K562 (cell line): ENCODE measurements at regions of chr3 and their contacts with region 1.

Region 1: DNA sequence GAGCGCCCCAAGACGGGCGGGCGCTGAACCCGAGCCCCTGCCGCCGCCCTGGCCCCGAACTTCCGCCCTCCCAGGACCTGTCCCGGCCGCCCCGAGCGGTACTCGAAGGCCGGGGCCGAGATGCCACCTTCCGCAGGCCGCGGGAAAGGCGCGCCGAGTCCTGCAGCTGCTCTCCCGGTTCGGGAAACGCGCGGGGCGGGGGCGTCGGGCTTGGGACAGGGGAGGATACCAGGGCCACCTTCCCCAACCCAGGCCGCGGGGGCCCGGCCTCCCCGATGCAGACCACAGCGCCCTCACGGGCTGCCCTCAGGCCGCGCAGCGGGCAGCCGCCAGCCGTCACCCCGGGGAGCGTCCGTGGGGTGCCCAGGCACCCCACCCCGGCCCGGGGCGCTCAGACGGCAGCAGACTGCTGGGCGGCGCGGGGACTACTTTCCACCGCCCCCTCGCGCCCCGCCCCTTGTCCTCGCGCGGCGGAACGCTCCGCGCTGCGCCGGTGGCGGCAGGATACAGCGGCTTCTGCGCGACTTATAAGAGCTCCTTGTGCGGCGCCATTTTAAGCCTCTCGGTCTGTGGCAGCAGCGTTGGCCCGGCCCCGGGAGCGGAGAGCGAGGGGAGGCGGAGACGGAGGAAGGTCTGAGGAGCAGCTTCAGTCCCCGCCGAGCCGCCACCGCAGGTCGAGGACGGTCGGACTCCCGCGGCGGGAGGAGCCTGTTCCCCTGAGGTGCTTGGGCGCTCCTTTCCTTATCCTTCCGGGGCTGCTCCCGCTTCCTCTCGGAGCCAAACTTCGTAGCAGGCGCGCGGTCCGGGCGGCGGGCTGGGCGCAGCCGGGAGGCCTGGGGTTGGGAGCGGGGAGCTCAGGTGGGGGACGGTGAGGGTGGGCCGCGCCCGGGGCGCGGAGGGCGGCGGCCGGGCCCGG is at the start of gene CTNNB1:
- DNase-seq: peak; percentile 82 to 97 (median 84)
- ATAC-seq: peak; percentile 84
- H3K4me3 ChIP-seq: peak within 1 kb of the TSS; percentile 90
- H3K27ac ChIP-seq: peak within 1 kb of the TSS; percentile 94
- H3K4me1 ChIP-seq: peaks cover 9 to 16% of the 10 kb centered on the region in 2 experiments; a peak in 4 of 5 replicates
- H3K27me3 ChIP-seq: peaks cover 5 to 28% of the 10 kb centered on the region in 2 experiments; a peak in 4 of 5 replicates
- CTCF ChIP-seq: no peak
- EP300 ChIP-seq: 0 out of 2 replicates have a peak, but pooled peaks have one; percentile 27
- POLR2A ChIP-seq: peak; percentile 99
- RAD21 ChIP-seq: peak; percentile 22 to 30; a peak in 2 of 4 replicates
- polyA plus RNA-seq, gene CTNNB1: 44.3 to 51.8 TPM

Region 2: DNA sequence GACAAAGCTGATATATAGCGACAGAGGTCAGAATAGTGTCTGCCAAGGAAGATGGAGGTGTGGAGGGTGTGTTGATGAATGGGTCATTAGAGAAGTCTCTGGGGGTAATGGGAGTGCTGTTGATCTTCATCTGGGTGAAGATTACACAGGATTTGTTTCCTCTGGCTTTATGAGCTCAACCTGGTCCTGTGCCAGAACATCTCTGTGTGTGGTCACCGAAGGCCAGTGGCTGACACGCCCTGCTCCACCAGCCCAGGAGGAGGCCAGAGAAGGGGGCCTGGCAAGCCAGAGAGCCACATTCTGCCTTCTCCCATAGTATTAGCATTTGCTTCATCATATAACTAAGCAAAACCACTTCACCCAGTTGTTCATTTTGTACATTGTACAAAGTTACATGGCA is 553.3 kb before region 1 on chr3:
- CTCF ChIA-PET with region 1: no interaction called
- POLR2A ChIA-PET with region 1: no interaction called
- in situ Hi-C with region 1: no loop called
- intact Hi-C with region 1: no loop called
- DNase-seq: no peak
- ATAC-seq: no peak
- H3K4me3 ChIP-seq: no peak overlapping the region
- H3K27ac ChIP-seq: no peak overlapping the region
- H3K4me1 ChIP-seq: no peaks in the 10 kb centered on the region
- H3K27me3 ChIP-seq: no peaks in the 10 kb centered on the region; a peak in 1 of 5 replicates
- CTCF ChIP-seq: no peak
- EP300 ChIP-seq: no peak
- POLR2A ChIP-seq: no peak
- RAD21 ChIP-seq: no peak

Region 3: DNA sequence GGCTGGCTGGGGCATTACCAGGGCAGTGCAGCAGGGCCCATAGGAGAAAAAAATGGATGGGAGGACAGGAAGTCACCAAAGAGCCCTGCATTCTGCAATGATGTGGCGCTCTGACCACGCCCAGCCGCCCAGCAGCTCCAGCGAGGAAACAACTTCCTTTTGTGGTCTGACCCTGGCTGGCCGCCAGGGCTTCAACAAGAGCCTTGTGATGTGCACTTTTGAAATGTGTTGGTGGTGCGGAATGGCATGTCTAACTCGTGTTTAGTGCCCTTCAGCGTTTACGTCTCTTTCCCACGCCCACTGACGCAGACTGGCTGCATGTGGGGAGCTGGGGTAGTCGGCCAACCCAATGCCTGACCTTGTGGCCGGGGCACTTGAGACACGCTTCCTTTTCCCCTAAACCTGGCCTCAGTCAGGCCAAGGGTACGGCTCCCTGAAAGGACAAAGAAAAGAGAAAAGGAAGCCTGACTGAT is 81.8 kb before region 1 on chr3:
- CTCF ChIA-PET with region 1: no interaction called
- POLR2A ChIA-PET with region 1: interaction called, 4 read pairs
- in situ Hi-C with region 1: no loop called
- intact Hi-C with region 1: loop called (anchors 5 kb)
- DNase-seq: peak; percentile 82 to 95 (median 84)
- ATAC-seq: peak; percentile 95
- H3K4me3 ChIP-seq: no peak overlapping the region
- H3K27ac ChIP-seq: peak overlapping the region; percentile 63; the same call in 2 of the 3 replicates
- H3K4me1 ChIP-seq: peaks cover 11 to 21% of the 10 kb centered on the region in 2 experiments
- H3K27me3 ChIP-seq: peaks cover 6 to 25% of the 10 kb centered on the region in 2 experiments
- CTCF ChIP-seq: 0 out of 6 replicates have a peak, but pooled peaks of 1 of the 3 experiments have one; percentile 10
- EP300 ChIP-seq: no peak; the same call in 1 of the 2 replicates
- POLR2A ChIP-seq: no peak
- RAD21 ChIP-seq: no peak; a peak in 1 of 4 replicates

Region 4: GRCh38 chr3:41144631-41145030 is 54.6 kb before region 1 on chr3:
- CTCF ChIA-PET with region 1: no interaction called
- POLR2A ChIA-PET with region 1: no interaction called
- in situ Hi-C with region 1: no loop called
- intact Hi-C with region 1: no loop called
- DNase-seq: no peak
- ATAC-seq: no peak
- H3K4me3 ChIP-seq: no peak overlapping the region
- H3K27ac ChIP-seq: no peak overlapping the region
- H3K4me1 ChIP-seq: no peaks in the 10 kb centered on the region
- H3K27me3 ChIP-seq: peaks cover 6 to 21% of the 10 kb centered on the region in 2 experiments; a peak in 3 of 5 replicates
- CTCF ChIP-seq: no peak
- EP300 ChIP-seq: no peak
- POLR2A ChIP-seq: no peak
- RAD21 ChIP-seq: no peak

Region 5: GRCh38 chr3:41213588-41213987 is 14.4 kb after region 1 on chr3:
- CTCF ChIA-PET with region 1: no interaction called
- POLR2A ChIA-PET with region 1: interaction called, 33 read pairs
- in situ Hi-C with region 1: no loop called
- intact Hi-C with region 1: no loop called
- DNase-seq: no peak
- ATAC-seq: no peak
- H3K4me3 ChIP-seq: no peak overlapping the region
- H3K27ac ChIP-seq: no peak overlapping the region
- H3K4me1 ChIP-seq: peaks cover 5 to 7% of the 10 kb centered on the region in 2 experiments; a peak in 2 of 5 replicates
- H3K27me3 ChIP-seq: no peaks in the 10 kb centered on the region
- CTCF ChIP-seq: no peak
- EP300 ChIP-seq: no peak
- POLR2A ChIP-seq: no peak
- RAD21 ChIP-seq: no peak